ENCODE measurements at regions of chr7 and their contacts with region 1.

Region 1: DNA sequence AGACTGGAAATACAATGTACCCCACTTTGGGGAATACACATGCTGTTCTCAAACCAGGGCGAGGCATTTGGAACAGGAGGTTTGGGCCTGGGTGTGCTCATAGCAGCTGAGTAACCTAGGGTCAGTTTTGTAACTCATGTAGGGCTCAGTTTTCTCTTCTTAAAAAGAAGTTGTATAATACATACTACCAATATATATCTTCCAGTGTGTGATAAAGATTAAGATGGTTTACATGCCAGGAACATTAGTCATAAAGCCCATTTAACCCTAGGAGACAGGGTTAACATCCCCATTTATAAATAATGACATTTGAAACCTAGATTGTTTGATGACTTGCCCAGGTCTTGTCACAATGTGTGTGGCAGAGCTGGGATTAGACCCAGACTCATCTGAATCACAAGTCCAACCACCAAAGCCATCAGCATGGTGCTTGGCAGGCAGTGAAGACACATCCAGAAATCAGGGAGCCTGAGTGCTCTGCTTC is 6.0 kb downstream of the AKR1B10 start:
- DNase-seq: peak; percentile 81 to 86
- ATAC-seq: peak; percentile 82 to 83
- H3K4me3 ChIP-seq: no peak overlapping the region
- H3K27ac ChIP-seq: peak overlapping the region; percentile 88 to 92 (median 90)
- H3K4me1 ChIP-seq: peaks cover 51 to 71% of the 10 kb centered on the region in 2 donors
- H3K27me3 ChIP-seq: no peaks in the 10 kb centered on the region
- CTCF ChIP-seq: no peak
- POLR2A ChIP-seq: no peak

Region 2: DNA sequence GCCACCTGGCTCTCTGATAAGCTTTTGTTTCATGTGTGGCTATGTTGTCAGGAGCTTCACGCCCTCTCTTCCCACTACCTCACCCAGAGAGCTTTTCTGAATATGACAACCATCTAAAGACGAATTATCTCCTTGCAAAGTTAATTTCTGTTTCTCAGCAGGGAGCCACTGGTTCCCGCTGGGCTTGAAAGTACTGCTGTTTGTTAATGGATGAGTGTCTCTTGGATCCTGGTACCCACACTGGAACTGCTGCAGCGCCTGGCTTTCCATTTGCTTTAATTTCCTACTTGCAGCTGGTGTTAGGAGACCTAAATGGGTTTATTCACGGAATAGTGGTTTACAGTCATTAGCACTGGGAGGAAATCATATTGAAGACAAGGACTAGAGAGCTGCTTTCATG is 674.1 kb before region 1 on chr7:
- in situ Hi-C with region 1: no loop called
- intact Hi-C with region 1: no loop called
- DNase-seq: no peak
- ATAC-seq: no peak
- H3K4me3 ChIP-seq: no peak overlapping the region
- H3K27ac ChIP-seq: no peak overlapping the region
- H3K4me1 ChIP-seq: peaks cover 4 to 8% of the 10 kb centered on the region in 2 donors
- H3K27me3 ChIP-seq: no peaks in the 10 kb centered on the region
- CTCF ChIP-seq: no peak
- POLR2A ChIP-seq: no peak

Region 3: DNA sequence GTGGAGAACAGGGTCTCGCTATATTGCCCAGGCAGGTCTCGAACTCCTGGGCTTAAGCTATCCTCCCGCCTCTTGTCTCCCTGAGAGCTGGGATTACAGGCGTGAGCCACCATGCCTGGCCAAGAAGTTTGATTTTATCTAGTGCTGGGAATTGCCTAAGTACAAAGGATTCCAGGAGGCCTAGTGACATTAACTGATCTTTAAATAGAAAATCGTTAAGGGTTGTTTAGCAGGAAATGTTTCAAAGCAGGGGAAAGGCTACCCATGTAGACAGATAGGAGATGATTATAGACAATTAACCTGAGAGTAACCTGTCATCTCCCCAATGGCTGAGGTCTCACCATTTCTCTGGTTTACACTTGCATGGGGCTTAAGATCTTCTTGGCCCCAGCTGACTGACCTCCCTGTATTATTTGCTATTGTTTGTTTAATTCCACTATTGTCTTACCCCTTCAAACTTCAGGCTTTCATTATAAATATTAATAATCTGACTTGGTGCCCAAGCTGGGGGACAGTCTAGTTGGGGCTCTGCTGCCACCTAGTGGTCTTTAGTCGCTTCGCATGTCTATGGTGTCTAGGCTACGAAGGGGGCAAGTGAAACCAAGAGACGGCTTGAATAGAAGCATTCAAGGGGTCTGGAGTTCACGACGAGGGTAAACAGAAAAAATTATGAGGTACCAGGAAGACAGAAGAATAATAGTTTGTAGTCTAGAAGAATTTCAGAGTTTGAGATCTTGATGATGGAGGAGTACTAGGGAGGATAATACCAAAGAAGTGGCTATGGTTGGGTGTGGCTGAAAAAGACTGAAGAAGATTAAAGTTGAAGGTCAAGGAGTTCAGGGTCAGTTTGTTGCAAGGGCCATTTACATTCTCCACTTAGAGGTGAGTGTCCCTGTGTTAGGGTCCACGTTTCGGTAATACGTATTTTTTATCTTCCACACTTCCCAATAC is 72.9 kb after region 1 on chr7:
- in situ Hi-C with region 1: no loop called
- intact Hi-C with region 1: no loop called
- DNase-seq: peak; percentile 34 to 38
- ATAC-seq: peak; percentile 89 to 90
- H3K4me3 ChIP-seq: peak overlapping the region in 2 of 4 donors; percentile 12 to 27
- H3K27ac ChIP-seq: no peak overlapping the region
- H3K4me1 ChIP-seq: no peaks in the 10 kb centered on the region
- H3K27me3 ChIP-seq: no peaks in the 10 kb centered on the region
- CTCF ChIP-seq: peak; percentile 81 to 98 (median 89)
- POLR2A ChIP-seq: no peak

Region 4: DNA sequence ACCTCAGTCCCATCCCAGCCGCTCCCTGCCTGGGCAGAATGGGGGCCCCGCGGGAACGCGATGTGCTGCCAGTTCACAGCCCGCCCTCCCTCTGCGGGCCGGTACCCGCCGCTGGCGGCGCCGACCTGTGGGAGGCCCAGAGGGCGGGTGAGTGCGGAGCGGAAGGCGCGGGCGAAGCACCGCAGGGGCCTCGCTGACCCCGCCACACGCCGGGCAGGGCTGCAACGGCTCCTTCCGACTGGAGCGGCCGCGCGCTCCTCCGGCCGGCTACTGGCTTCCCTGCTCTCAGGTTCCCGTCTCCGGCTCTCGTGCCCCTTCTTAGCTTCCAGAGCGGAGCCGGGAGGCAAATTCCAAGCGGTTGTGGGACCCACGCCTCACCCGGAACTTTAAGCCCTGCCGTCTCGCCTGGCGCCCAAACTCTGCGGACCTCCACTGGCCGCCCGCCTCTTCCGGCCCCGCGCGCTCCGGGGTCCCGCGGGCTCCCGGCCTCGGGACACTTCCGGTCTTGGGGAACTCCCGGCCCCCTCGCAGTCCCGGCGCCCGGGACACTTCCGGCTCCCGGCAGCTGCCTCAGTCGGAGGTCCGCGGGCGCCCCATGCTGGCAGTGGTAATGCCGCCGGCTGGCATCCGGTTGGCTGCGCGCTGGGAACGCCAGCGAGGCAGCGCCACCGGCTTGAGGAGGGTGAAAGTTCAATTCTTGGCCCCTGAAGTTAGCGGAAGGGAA is 637.1 kb after region 1 on chr7 and contains the start of gene CYREN:
- in situ Hi-C with region 1: no loop called
- intact Hi-C with region 1: loop called (anchors 5 kb)
- DNase-seq: peak; percentile 90 to 95
- ATAC-seq: peak; percentile 63 to 74
- H3K4me3 ChIP-seq: peak within 1 kb of the TSS; percentile 63 to 85 (median 72)
- H3K27ac ChIP-seq: peak within 1 kb of the TSS; percentile 93 to 97 (median 96)
- H3K4me1 ChIP-seq: peaks cover 53 to 59% of the 10 kb centered on the region in 2 donors
- H3K27me3 ChIP-seq: no peaks in the 10 kb centered on the region
- CTCF ChIP-seq: peak; percentile 54 to 77 (median 66)
- POLR2A ChIP-seq: peak; percentile 81 to 89
- total RNA-seq, gene CYREN: 11.8 to 51.5 (median 20.4) TPM